Ovary (tissue), 10 donors: ENCODE measurements at regions of chr17 and their contacts with region 1.

Region 1: GRCh38 chr17:56956992-56957391 is 3.9 kb downstream of the COIL start:
- DNase-seq: no peak
- H3K4me3 ChIP-seq: no peak overlapping the region
- H3K27ac ChIP-seq: no peak overlapping the region
- H3K4me1 ChIP-seq: peaks cover 6% of the 10 kb centered on the region
- H3K27me3 ChIP-seq: no peaks in the 10 kb centered on the region
- CTCF ChIP-seq: no peak
- EP300 ChIP-seq: no peak
- POLR2A ChIP-seq: no peak

Region 2: GRCh38 chr17:56897646-56898424 is 59.2 kb before region 1 on chr17:
- intact Hi-C with region 1: loop called in 1 of 4 experiments (anchors 5 kb)
- DNase-seq: no peak
- H3K4me3 ChIP-seq: no peak overlapping the region
- H3K27ac ChIP-seq: no peak overlapping the region
- H3K4me1 ChIP-seq: no peaks in the 10 kb centered on the region
- H3K27me3 ChIP-seq: no peaks in the 10 kb centered on the region
- CTCF ChIP-seq: no peak
- EP300 ChIP-seq: no peak
- POLR2A ChIP-seq: no peak